Posterior vena cava (tissue), 2 donors: ENCODE measurements at regions of chr16 and their contacts with region 1.

Region 1: GRCh38 chr16:11164482-11165270 is 91.3 kb downstream of the SOCS1 start:
- DNase-seq: no peak

Region 2: GRCh38 chr16:10992797-10993196 is 171.9 kb before region 1 on chr16:
- intact Hi-C with region 1: loop called in 1 of 2 experiments (anchors 10 kb)
- DNase-seq: no peak

Region 3: DNA sequence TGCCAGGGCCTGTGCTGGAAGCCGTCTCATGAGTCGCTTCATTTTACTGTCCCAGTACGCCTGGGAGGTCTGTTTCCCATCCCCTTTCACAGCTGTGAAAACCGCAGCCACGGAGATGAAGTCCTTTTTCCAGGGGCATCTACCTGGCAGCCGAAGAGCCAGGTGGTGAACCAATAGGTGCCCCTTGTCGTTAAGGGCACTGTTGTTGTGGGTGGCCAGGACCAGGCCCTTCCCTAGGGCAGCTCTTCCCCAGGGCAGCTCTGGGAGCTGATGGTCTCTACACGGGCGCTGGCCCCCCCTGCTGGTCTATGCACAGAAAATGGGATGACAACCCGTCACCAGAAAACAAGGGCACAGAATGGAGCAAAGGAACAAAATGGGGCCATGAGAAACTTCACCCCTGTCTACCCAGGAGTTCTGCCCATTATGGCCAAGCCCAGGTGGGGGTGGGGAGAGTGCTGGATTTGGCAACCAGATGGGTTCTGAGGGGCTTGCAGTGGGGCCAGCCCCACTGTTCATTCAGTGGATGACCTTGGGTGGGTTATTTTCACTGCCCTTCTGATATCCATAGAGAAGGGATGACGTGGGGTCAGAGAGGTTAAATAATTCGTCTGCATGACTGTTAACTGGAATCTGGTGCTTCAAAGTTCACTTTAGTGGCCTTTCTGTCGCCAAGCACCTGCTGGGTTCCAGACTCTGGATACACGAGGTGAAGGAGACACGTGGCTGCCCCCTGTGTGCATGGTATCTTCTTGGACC is 192.1 kb after region 1 on chr16:
- intact Hi-C with region 1: no loop called
- DNase-seq: peak; percentile 89

Region 4: DNA sequence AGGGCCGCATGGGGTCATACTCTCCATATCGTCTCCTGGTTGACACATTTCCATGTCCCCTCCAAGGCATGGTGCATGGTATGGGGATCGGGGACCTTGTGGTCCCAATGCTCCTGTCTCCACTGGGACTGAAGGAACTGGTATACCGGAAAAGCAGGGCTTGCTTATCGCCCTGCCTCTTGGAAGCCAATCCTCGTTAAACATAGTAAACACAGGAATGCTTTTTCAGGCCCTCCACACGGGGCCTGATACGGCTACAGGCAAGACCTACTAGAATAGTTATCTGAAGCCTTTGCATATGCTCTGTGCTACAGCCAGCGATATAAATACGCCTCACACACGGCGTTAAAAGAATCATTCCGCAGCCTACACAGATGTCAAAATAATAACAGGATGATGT is 1896.3 kb after region 1 on chr16:
- intact Hi-C with region 1: no loop called
- DNase-seq: no peak